ENCODE measurements at regions of chr9 and their contacts with region 1.

Region 1: GRCh38 chr9:134067904-134068743 is at the start of gene BRD3:
- DNase-seq: peak; percentile 88 to 89
- H3K4me3 ChIP-seq: peak within 1 kb of the TSS; percentile 63 to 65 (median 64)
- H3K27ac ChIP-seq: peak within 1 kb of the TSS; percentile 95 to 98 (median 98)
- H3K4me1 ChIP-seq: peaks cover 20 to 23% of the 10 kb centered on the region in 2 donors
- H3K27me3 ChIP-seq: no peaks in the 10 kb centered on the region
- CTCF ChIP-seq: peak in 1 of 6 experiments; percentile 3
- POLR2A ChIP-seq: peak; percentile 67 to 94
- total RNA-seq, gene BRD3: 21.6 to 42.7 (median 28.7) TPM

Region 2: DNA sequence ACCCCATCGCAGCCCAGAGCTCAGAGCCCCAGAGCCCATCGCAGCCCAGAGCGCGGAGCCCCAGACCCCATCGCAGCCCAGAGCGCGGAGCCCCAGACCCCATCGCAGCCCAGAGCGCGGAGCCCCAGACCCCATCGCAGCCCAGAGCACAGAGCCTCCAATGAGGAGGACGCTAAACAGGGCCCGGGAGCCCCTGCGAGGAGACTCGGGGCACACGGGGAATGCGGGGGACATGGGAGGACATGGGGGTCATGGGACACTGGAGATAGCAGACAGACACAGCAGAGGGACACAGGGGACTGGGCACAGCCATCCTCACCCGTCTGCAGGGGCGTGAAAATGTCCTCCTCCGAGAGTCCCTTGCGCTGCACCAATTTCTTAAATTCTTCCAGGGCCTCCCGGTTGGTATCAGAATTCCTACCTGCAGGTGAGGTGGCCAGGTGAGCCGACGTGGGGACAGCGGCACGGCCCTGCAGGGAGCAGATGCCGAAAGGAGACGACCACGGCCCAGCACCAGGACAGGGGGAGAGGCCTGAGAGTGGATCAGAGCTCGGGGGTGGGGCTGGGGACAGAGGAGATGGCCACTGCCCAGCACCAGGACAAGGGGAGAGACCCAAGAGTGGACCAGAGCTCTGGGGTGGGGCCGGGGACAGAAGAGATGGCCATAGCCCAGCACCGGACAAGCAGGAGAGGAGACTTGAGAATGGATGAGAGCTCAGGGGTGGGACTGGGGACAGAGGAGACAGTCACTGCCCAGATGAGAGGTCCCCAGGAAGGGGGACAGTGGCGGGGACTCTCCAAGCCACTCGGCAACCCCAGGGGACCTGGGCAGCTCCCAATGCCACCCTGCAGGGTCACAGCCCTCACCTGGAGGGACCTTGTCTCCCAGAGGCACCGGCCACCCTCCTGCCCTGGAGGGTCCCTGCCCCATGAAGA is 861.9 kb before region 1 on chr9:
- intact Hi-C with region 1: no loop called
- DNase-seq: no peak
- H3K4me3 ChIP-seq: no peak overlapping the region
- H3K27ac ChIP-seq: no peak overlapping the region
- H3K4me1 ChIP-seq: no peaks in the 10 kb centered on the region
- H3K27me3 ChIP-seq: no peaks in the 10 kb centered on the region
- CTCF ChIP-seq: no peak
- POLR2A ChIP-seq: no peak

Region 3: DNA sequence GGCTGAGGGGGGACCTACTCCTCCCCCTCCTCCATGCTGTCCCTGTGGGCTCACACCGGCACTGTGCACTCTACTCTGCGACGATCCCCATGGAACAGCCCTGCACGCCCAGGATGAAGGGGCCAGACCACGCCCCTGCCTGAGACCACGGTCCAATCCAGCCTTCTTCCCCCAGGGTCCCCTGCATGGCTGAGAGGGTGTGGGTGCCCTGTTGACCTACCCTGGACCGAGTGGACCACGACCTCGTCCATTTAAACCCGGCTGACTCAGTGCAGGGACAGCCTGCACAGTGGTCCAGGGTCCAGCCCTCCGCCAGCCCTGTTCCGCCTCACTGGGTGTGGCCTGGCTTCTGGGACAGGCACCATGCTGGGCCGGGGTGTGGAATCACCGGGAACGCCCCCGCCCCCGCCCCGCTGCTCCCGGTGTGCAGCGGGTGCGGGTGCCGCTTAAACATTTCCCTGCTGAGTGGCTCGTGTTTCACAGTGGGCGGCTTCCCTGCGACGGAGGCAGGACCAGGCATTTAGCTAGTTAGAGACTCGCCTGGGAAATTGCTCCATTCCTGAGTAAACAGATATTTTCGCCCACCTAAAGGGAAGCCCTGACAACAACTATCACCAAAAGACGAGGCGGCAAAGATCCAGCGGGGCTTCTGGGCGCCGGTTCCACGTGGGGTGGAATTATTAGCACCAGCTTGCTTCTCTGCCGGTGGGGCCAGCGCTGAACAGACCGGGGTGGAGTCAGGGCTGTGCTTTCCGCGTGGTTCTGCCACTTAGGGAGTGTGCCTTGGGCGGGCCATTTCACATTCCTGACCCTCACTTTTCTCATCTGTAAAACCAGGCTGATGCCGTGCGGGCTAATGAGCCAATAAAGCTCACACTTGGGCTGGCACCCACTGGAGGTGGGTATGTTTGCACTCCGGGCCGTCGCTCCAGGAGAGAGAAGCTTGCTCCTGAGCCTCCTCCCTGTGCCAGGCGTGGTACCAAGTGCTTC is 409.4 kb before region 1 on chr9:
- intact Hi-C with region 1: no loop called
- DNase-seq: peak; percentile 53 to 62
- H3K4me3 ChIP-seq: no peak overlapping the region
- H3K27ac ChIP-seq: no peak overlapping the region
- H3K4me1 ChIP-seq: peaks cover 26 to 37% of the 10 kb centered on the region in 2 donors
- H3K27me3 ChIP-seq: no peaks in the 10 kb centered on the region
- CTCF ChIP-seq: no peak
- POLR2A ChIP-seq: no peak

Region 4: GRCh38 chr9:134024828-134025605 is 43.1 kb before region 1 on chr9 and contains the start of gene BRD3OS:
- intact Hi-C with region 1: loop called (anchors 5 kb)
- DNase-seq: peak; percentile 97
- H3K4me3 ChIP-seq: peak within 1 kb of the TSS; percentile 86 to 95 (median 87)
- H3K27ac ChIP-seq: peak within 1 kb of the TSS in 2 of 3 donors; percentile 40 to 56
- H3K4me1 ChIP-seq: peaks cover 8 to 10% of the 10 kb centered on the region in 2 donors
- H3K27me3 ChIP-seq: no peaks in the 10 kb centered on the region
- CTCF ChIP-seq: peak in 1 of 6 experiments; percentile 31
- POLR2A ChIP-seq: peak in 1 of 2 donors; percentile 57
- total RNA-seq, gene BRD3OS: 26.4 to 29.3 (median 27.2) TPM

Region 5: GRCh38 chr9:134135343-134136118 is 67.4 kb after region 1 on chr9 and contains the start of gene WDR5:
- intact Hi-C with region 1: loop called (anchors 10 kb)
- DNase-seq: peak; percentile 89 to 91
- H3K4me3 ChIP-seq: peak within 1 kb of the TSS; percentile 84 to 95 (median 92)
- H3K27ac ChIP-seq: peak within 1 kb of the TSS; percentile 85 to 90 (median 89)
- H3K4me1 ChIP-seq: peaks cover 47 to 60% of the 10 kb centered on the region in 2 donors
- H3K27me3 ChIP-seq: no peaks in the 10 kb centered on the region
- CTCF ChIP-seq: peak in 2 of 6 experiments; percentile 11 to 16
- POLR2A ChIP-seq: peak in 1 of 2 donors; percentile 73
- total RNA-seq, gene WDR5: 24.1 to 40.1 (median 27.1) TPM

Region 6: GRCh38 chr9:134391314-134392231 is 323.4 kb after region 1 on chr9:
- intact Hi-C with region 1: no loop called
- DNase-seq: no peak
- H3K4me3 ChIP-seq: no peak overlapping the region
- H3K27ac ChIP-seq: no peak overlapping the region
- H3K4me1 ChIP-seq: peaks cover 35 to 89% of the 10 kb centered on the region in 2 donors
- H3K27me3 ChIP-seq: no peaks in the 10 kb centered on the region
- CTCF ChIP-seq: no peak
- POLR2A ChIP-seq: no peak

Measured in thyroid gland (tissue), 4 donors.